ENCODE measurements at regions of chr7 and their contacts with region 1.

Region 1: DNA sequence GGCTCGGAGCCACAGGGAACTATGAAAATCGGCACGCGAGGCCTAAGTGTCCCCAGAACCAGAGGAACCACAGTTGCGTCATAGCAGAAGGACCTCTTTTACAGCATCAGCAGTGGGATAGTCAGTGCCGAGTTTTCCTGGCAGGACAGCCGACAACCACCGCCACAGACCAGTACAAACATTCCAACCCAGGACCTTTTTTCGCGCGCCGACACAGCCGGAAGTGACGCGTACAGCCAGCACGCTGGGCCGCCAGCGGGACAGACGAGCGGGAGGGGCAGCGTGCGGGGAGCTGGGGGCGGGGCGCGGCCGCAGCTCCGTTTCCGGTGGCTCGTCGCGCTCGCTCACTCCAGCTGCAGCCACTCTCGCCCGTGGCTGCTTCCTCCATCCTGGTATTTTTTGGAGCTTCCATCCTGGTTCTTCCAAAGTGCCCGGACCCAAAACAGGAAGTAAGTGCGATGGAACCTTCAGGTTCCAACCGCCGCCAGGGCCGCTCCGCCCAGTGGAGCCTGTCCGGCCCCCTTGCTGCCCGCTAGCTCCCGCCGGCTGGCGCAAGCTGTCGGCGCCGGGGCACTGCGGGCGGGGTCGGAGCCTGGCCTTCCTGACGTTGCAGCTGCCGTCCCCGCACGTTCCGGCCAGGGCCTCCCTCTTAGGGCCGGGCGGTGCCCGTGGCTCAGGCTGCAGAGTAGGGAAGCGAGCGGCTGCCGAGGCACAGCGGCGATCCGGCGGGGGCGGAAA is at the start of gene DMTF1:
- DNase-seq: peak; percentile 85 to 92
- H3K4me3 ChIP-seq: peak within 1 kb of the TSS; percentile 78
- H3K27ac ChIP-seq: peak within 1 kb of the TSS; percentile 86
- H3K4me1 ChIP-seq: peaks cover 27% of the 10 kb centered on the region
- H3K27me3 ChIP-seq: no peaks in the 10 kb centered on the region
- CTCF ChIP-seq: no peak
- total RNA-seq, gene DMTF1: 54.0 and 75.3 TPM in 2 replicates

Region 2: DNA sequence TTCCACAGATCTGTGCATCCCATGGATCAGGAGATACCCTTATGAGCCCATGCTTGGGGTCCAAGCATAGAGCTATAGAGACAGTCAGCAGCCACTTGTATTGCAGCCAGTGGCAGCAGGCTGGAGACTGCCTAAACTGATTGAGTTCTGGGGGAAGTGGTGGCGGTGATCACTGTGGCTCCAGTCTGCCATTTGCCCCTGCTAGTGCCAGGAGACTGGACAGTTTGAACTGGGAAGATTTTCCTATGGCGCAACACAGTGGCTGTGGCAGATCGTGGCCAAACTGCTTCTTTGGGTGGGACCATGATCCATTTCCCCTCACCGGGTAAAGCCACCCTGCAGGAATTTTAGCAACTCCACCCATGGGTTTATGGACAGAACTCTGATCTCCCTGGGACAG is 1285.7 kb before region 1 on chr7:
- CTCF ChIA-PET with region 1: no interaction called
- POLR2A ChIA-PET with region 1: interaction called, 21 read pairs
- intact Hi-C with region 1: no loop called
- DNase-seq: no peak
- H3K4me3 ChIP-seq: no peak overlapping the region
- H3K27ac ChIP-seq: no peak overlapping the region
- H3K4me1 ChIP-seq: no peaks in the 10 kb centered on the region
- H3K27me3 ChIP-seq: no peaks in the 10 kb centered on the region
- CTCF ChIP-seq: no peak

Region 3: GRCh38 chr7:86939197-86939814 is 213.0 kb before region 1 on chr7:
- CTCF ChIA-PET with region 1: no interaction called
- POLR2A ChIA-PET with region 1: no interaction called
- intact Hi-C with region 1: loop called (anchors 1 kb)
- DNase-seq: peak; percentile 51 to 55
- H3K4me3 ChIP-seq: no peak overlapping the region
- H3K27ac ChIP-seq: no peak overlapping the region
- H3K4me1 ChIP-seq: no peaks in the 10 kb centered on the region
- H3K27me3 ChIP-seq: no peaks in the 10 kb centered on the region
- CTCF ChIP-seq: peak; percentile 83

Region 4: DNA sequence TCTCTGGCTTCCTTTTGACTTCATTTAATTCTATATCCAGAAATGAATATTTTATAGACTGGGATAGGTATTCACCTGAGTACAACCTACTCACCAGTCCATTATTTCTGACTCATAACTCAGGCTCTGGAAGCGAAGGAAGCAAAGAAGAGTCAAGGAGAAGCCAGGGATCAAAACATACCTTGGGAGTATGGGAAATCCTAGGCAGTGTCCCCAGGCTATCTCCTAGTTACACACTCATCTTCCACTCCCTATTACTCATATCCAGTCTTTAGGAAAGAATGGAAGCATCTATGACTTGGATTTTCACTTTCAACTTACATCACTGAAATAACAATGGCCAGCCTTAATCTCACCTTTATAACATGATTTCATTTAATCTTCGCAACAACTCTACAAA is 52.0 kb before region 1 on chr7:
- CTCF ChIA-PET with region 1: no interaction called
- POLR2A ChIA-PET with region 1: interaction called, 10 read pairs
- intact Hi-C with region 1: no loop called
- DNase-seq: no peak
- H3K4me3 ChIP-seq: no peak overlapping the region
- H3K27ac ChIP-seq: peak overlapping the region; percentile 8; the same call in 1 of the 2 replicates
- H3K4me1 ChIP-seq: peaks cover 13% of the 10 kb centered on the region
- H3K27me3 ChIP-seq: no peaks in the 10 kb centered on the region
- CTCF ChIP-seq: no peak

Region 5: GRCh38 chr7:87219545-87220025 is 67.3 kb after region 1 on chr7 and contains the start of gene TMEM243:
- CTCF ChIA-PET with region 1: interaction called, 3 read pairs
- POLR2A ChIA-PET with region 1: interaction called, 3 read pairs
- intact Hi-C with region 1: loop called (anchors 2 kb)
- DNase-seq: peak; percentile 57 to 64
- H3K4me3 ChIP-seq: peak within 1 kb of the TSS; percentile 94
- H3K27ac ChIP-seq: peak within 1 kb of the TSS; percentile 36
- H3K4me1 ChIP-seq: peaks cover 20% of the 10 kb centered on the region
- H3K27me3 ChIP-seq: no peaks in the 10 kb centered on the region
- CTCF ChIP-seq: no peak
- total RNA-seq, gene TMEM243: 24.6 and 26.5 TPM in 2 replicates

Measured in PC-9 (cell line).